ENCODE measurements at regions of chr6 and their contacts with region 1.

Region 1: GRCh38 chr6:156396068-156396771 is 381.0 kb upstream of the ARID1B start:
- DNase-seq: no peak
- H3K4me3 Mint-ChIP-seq: peak overlapping the region; percentile 61
- H3K27ac Mint-ChIP-seq: peak overlapping the region; percentile 87
- H3K4me1 Mint-ChIP-seq: peaks cover 35% of the 10 kb centered on the region
- H3K27me3 Mint-ChIP-seq: peaks cover 39% of the 10 kb centered on the region

Region 2: GRCh38 chr6:156423829-156424228 is 27.6 kb after region 1 on chr6:
- CTCF ChIA-PET with region 1: no interaction called
- POLR2A ChIA-PET with region 1: interaction called, 11 read pairs
- DNase-seq: peak; percentile 70
- H3K4me3 Mint-ChIP-seq: peak overlapping the region; percentile 10
- H3K27ac Mint-ChIP-seq: peak overlapping the region; percentile 80
- H3K4me1 Mint-ChIP-seq: peaks cover 31% of the 10 kb centered on the region
- H3K27me3 Mint-ChIP-seq: peaks cover 2% of the 10 kb centered on the region

Measured in activated CD4-positive, alpha-beta memory T cell treated with anti-CD3 and anti-CD28 coated beads, Interleukin-2, amount 10 ng/mL, durations not matched to agents 7 days and 5 days (primary cell).